Heart left ventricle (tissue), 16 donors: ENCODE measurements at regions of chr5 and their contacts with region 1.

Region 1: GRCh38 chr5:66807743-66808142 is 211.6 kb downstream of the MAST4 start:
- DNase-seq: no peak
- ATAC-seq: peak; percentile 35 to 77 (median 68)
- H3K4me3 ChIP-seq: no peak overlapping the region
- H3K27ac ChIP-seq: no peak overlapping the region
- H3K4me1 ChIP-seq: peaks cover 0 to 12% (median 0%) of the 10 kb centered on the region in 12 donors
- H3K27me3 ChIP-seq: no peaks in the 10 kb centered on the region
- CTCF ChIP-seq: peak; percentile 7 to 61 (median 37)
- POLR2A ChIP-seq: no peak

Region 2: GRCh38 chr5:66689522-66690220 is 118.1 kb before region 1 on chr5:
- intact Hi-C with region 1: no loop called
- DNase-seq: no peak
- ATAC-seq: peak in 2 of 4 donors; percentile 19 to 25
- H3K4me3 ChIP-seq: no peak overlapping the region
- H3K27ac ChIP-seq: no peak overlapping the region
- H3K4me1 ChIP-seq: no peaks in the 10 kb centered on the region
- H3K27me3 ChIP-seq: no peaks in the 10 kb centered on the region
- CTCF ChIP-seq: no peak
- POLR2A ChIP-seq: no peak

Region 3: GRCh38 chr5:67202828-67203227 is 395.1 kb after region 1 on chr5:
- intact Hi-C with region 1: loop called in 6 of 10 experiments (anchors 2 to 5 kb)
- DNase-seq: no peak
- ATAC-seq: peak in 1 of 4 donors; percentile 66
- H3K4me3 ChIP-seq: no peak overlapping the region
- H3K27ac ChIP-seq: peak overlapping the region in 1 of 12 donors; percentile 78
- H3K4me1 ChIP-seq: peaks cover 0 to 73% (median 0%) of the 10 kb centered on the region in 12 donors
- H3K27me3 ChIP-seq: no peaks in the 10 kb centered on the region
- CTCF ChIP-seq: no peak
- POLR2A ChIP-seq: no peak

Region 4: DNA sequence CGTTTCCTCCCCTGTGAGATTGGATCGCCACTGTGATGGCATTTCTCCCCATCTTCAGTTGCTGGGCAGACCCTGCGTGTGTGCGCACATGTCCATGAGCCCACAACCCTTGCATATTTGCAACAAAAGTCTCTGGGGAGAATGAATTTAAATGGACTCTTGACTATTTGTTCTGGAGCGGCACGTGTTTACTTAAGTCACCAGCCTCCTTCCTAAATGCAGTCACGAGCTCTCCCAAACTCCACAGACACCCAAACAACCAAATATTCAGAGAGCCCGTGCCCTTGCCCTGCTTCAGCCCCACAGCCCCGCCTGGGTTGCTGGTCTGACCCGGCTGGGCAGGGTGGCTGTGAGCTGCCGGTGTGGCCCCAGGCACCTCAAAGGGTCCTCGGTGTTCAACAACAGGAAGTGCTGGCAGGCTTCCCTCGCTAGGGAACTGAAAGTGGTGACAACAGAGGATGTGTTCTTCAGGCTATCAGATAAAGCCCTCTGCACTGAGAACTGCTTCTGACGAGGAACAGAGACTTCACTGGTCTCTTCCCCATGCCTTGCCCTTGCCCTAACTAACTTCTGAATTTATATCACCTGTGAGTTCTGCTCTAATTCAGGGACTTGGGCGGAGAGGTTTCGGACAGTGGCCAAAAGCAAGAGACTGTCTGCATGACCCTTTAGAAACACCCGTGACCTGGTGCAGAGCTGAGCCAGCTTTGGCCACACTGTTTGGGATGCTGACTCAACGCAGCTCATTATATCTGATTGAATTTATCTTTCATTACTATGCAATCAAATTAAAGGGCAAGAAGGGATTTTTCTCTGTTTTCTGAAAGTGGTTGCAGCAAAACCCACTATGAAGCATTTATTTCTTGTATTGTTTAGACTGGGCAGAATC is 408.1 kb after region 1 on chr5:
- intact Hi-C with region 1: loop called in 1 of 10 experiments (anchors 10 kb)
- DNase-seq: peak; percentile 81 to 94 (median 88)
- ATAC-seq: peak; percentile 81 to 95 (median 92)
- H3K4me3 ChIP-seq: peak overlapping the region in 9 of 12 donors; percentile 3 to 36 (median 32)
- H3K27ac ChIP-seq: peak overlapping the region in 11 of 12 donors; percentile 11 to 86 (median 61)
- H3K4me1 ChIP-seq: peaks cover 6 to 26% (median 19%) of the 10 kb centered on the region in 12 donors
- H3K27me3 ChIP-seq: no peaks in the 10 kb centered on the region
- CTCF ChIP-seq: no peak
- POLR2A ChIP-seq: no peak